A549 (cell line): ENCODE measurements at regions of chr14 and their contacts with region 1.

Region 1: GRCh38 chr14:23057757-23058653 is 685 bp upstream of the CDH24 start:
- DNase-seq: peak; percentile 87 to 89
- ATAC-seq: peak; percentile 67 to 79
- H3K4me3 ChIP-seq: peak overlapping the region; percentile 71
- H3K27ac ChIP-seq: peak overlapping the region; percentile 76 to 89
- H3K4me1 ChIP-seq: peaks cover 41% of the 10 kb centered on the region
- CTCF ChIP-seq: peak; percentile 82
- EP300 ChIP-seq: no peak
- POLR2A ChIP-seq: no peak
- RAD21 ChIP-seq: peak; percentile 79 to 81

Region 2: DNA sequence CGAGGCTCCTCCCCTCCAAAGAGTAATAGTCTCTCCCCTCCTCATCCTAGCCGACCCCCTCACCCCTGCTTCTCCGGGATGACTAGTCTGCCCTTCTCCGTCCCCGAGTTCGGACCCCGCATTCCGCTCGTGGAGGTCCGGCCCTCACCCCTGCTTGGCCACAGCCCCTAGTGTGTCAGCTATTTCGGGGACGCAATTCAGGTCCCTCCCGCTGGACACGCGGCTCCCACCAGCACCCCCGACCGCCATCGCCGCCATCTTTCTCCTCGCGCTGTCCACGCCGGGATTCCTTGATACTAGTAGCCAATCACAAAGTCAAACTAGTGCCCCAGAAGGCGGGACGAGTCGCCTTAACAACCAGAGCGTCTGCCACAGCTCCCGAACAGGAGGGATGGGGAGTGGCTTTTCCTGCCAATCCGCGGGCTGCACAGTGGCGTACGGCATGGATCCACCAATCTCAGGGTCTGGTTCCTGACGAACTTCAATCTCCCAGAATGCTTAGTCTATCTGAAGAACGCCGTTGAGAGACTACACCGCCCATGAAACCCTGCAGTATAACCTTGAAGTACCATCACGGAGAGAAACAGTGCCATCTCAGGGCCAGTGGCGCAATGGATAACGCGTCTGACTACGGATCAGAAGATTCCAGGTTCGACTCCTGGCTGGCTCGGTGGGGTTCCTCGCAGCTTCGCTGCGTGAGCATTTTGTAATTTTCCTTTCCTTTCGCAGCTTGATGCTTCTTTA is 128.7 kb before region 1 on chr14 and contains the start of gene PRMT5:
- CTCF ChIA-PET with region 1: interaction called, 25 read pairs
- POLR2A ChIA-PET with region 1: interaction called, 7 read pairs
- DNase-seq: peak; percentile 98 to 99
- ATAC-seq: peak; percentile 95 to 97
- H3K4me3 ChIP-seq: peak within 1 kb of the TSS; percentile 73
- H3K27ac ChIP-seq: peak within 1 kb of the TSS; percentile 82 to 90
- H3K4me1 ChIP-seq: peaks cover 22% of the 10 kb centered on the region
- CTCF ChIP-seq: no peak
- EP300 ChIP-seq: no peak
- POLR2A ChIP-seq: peak; percentile 97
- RAD21 ChIP-seq: no peak
- polyA plus RNA-seq, gene PRMT5: 214 and 299 TPM in 2 replicates

Region 3: GRCh38 chr14:22986508-22987054 is 71.4 kb before region 1 on chr14:
- CTCF ChIA-PET with region 1: interaction called, 1,206 read pairs
- POLR2A ChIA-PET with region 1: interaction called, 20 read pairs
- DNase-seq: peak; percentile 78 to 88
- ATAC-seq: peak; percentile 51 to 59; a peak in 4 of 6 replicates
- H3K4me3 ChIP-seq: no peak overlapping the region
- H3K27ac ChIP-seq: no peak overlapping the region
- H3K4me1 ChIP-seq: peaks cover 7% of the 10 kb centered on the region; the same call in 1 of the 3 replicates
- CTCF ChIP-seq: peak; percentile 91
- EP300 ChIP-seq: no peak
- POLR2A ChIP-seq: no peak
- RAD21 ChIP-seq: peak; percentile 82 to 93

Region 4: GRCh38 chr14:23025151-23025814 is 32.7 kb before region 1 on chr14:
- CTCF ChIA-PET with region 1: interaction called, 15 read pairs
- POLR2A ChIA-PET with region 1: no interaction called
- DNase-seq: no peak
- ATAC-seq: peak in 1 of 2 experiments; percentile 19; a peak in 1 of 6 replicates
- H3K4me3 ChIP-seq: no peak overlapping the region
- H3K27ac ChIP-seq: no peak overlapping the region
- H3K4me1 ChIP-seq: no peaks in the 10 kb centered on the region
- CTCF ChIP-seq: no peak
- EP300 ChIP-seq: no peak
- POLR2A ChIP-seq: no peak
- RAD21 ChIP-seq: no peak

Region 5: GRCh38 chr14:23047034-23047634 is 10.9 kb before region 1 on chr14:
- CTCF ChIA-PET with region 1: interaction called, 56 read pairs
- POLR2A ChIA-PET with region 1: no interaction called
- DNase-seq: no peak
- ATAC-seq: no peak
- H3K4me3 ChIP-seq: no peak overlapping the region
- H3K27ac ChIP-seq: 0 out of 6 replicates have a peak overlapping the region, but pooled peaks of 1 of the 2 experiments have one; percentile 12
- H3K4me1 ChIP-seq: no peaks in the 10 kb centered on the region
- CTCF ChIP-seq: no peak
- EP300 ChIP-seq: no peak
- POLR2A ChIP-seq: no peak
- RAD21 ChIP-seq: no peak

Region 6: GRCh38 chr14:23095196-23096108 is 37.4 kb after region 1 on chr14 and contains the start of gene C14orf119:
- CTCF ChIA-PET with region 1: interaction called, 11 read pairs
- POLR2A ChIA-PET with region 1: interaction called, 15 read pairs
- DNase-seq: peak; percentile 98
- ATAC-seq: peak; percentile 90 to 93
- H3K4me3 ChIP-seq: peak within 1 kb of the TSS; percentile 62
- H3K27ac ChIP-seq: peak within 1 kb of the TSS; percentile 89 to 97
- H3K4me1 ChIP-seq: peaks cover 23% of the 10 kb centered on the region
- CTCF ChIP-seq: no peak
- EP300 ChIP-seq: no peak
- POLR2A ChIP-seq: peak; percentile 81
- RAD21 ChIP-seq: no peak
- polyA plus RNA-seq, gene C14orf119: 82.5 and 107 TPM in 2 replicates

Region 7: DNA sequence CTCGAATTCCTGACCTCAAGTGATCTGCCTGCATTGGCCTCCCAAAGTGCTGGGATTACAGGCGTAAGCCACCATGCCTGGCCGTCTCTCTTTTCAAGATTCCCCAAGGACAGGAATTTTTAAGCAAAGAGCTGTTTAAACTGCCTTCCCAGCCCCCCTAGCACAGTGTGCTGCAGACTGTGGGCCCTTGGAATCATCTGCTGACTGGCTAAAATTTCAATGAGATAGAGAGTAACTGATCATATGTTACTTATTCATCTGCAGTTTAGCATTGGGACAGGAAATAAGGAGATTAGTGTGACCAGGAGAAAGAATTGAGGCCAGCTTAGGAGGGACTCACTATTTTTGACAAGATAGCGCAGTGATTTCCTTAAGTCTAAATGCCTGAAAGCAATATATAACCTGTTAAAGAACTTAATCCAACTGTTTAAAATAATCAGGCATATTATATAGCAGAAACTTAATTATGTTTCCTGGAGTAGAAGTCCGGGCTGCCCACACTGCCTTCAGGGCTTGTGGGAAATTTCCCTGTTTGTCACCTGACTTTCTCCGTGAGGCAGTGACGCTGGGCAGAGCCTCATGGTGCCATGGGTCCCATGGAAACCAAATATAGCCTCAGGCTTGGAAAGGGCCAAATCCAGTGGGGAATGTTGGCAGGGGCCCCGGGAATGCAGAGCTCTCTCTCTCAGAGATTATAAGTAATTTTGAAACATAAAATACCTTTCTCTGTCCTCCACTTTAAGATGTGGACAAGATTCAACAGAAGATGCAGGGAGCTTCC is 83.9 kb after region 1 on chr14:
- CTCF ChIA-PET with region 1: no interaction called
- POLR2A ChIA-PET with region 1: no interaction called
- DNase-seq: peak; percentile 34 to 53
- ATAC-seq: peak; percentile 62 to 70; a peak in 5 of 6 replicates
- H3K4me3 ChIP-seq: no peak overlapping the region
- H3K27ac ChIP-seq: peak overlapping the region in 1 of 2 experiments; percentile 49; a peak in 2 of 6 replicates
- H3K4me1 ChIP-seq: peaks cover 25% of the 10 kb centered on the region
- CTCF ChIP-seq: no peak
- EP300 ChIP-seq: no peak
- POLR2A ChIP-seq: no peak
- RAD21 ChIP-seq: no peak

Region 8: GRCh38 chr14:23154964-23155587 is 97.1 kb after region 1 on chr14:
- CTCF ChIA-PET with region 1: no interaction called
- POLR2A ChIA-PET with region 1: no interaction called
- DNase-seq: peak in 1 of 2 experiments; percentile 41
- ATAC-seq: peak; percentile 61 to 83
- H3K4me3 ChIP-seq: no peak overlapping the region
- H3K27ac ChIP-seq: peak overlapping the region; percentile 2 to 42; a peak in 5 of 6 replicates
- H3K4me1 ChIP-seq: peaks cover 5% of the 10 kb centered on the region; the same call in 1 of the 3 replicates
- CTCF ChIP-seq: no peak
- EP300 ChIP-seq: no peak
- POLR2A ChIP-seq: no peak
- RAD21 ChIP-seq: no peak